ENCODE measurements at regions of chr4 and their contacts with region 1.

Region 1: DNA sequence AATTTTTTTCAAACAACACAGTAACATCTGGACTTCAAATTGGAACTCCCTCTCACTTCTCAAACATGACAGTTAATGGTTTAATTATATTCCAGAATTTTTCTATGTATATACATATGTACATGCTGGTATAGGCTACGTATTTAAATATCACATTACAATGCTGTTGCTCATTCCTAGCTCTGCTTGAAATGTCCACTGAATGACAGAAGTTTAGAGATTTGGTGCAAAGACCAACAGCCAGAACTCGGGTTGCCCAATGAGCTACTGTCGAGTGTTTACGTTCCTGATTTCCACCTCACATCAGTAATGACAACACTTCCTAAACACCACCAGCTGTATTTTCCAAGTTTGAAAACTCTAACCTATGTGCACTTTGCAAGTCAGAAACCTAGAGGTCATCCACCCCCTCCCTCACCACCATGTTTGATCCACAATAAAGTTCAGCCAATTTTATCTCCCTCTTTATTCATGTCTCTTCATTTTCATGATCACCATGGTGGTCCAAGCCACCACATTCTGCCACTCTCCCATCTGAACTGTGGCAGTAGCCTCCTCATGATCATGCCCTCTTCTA is 49.3 kb upstream of the RPL34 start:
- DNase-seq: no peak

Region 2: DNA sequence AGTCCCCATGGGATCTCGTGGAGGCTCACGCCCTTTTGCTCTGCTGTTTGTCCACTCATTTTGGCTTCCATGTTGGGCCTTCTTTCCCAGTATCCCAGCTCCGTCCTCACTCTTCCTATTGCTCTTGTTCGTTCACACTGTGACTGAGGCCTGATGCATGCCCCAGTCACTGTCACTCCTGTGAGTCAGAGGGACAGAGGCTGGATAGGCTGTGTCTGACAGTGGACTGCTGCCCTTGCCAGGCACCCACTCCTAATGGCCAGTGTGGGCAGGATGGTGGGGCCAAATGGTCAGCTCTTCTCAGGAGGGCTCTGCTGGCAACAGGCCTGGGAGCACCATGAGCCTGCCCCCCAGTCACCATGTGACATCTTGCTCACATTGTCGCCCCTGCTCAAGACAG is 541.4 kb before region 1 on chr4:
- intact Hi-C with region 1: loop called (anchors 5 kb)
- DNase-seq: no peak

Measured in head of caudate nucleus (tissue), 42 donors.